ENCODE measurements at regions of chr4 and their contacts with region 1.

Region 1: GRCh38 chr4:173318648-173319211 is 15.4 kb downstream of the HMGB2 start:
- DNase-seq: no peak
- H3K4me3 ChIP-seq: no peak overlapping the region
- H3K27ac ChIP-seq: no peak overlapping the region
- H3K4me1 ChIP-seq: peaks cover 0 to 4% of the 10 kb centered on the region in 2 donors
- H3K27me3 ChIP-seq: no peaks in the 10 kb centered on the region
- CTCF ChIP-seq: peak; percentile 13 to 70 (median 54)
- POLR2A ChIP-seq: no peak

Region 2: GRCh38 chr4:173505924-173506518 is 187.3 kb after region 1 on chr4:
- intact Hi-C with region 1: loop called in 1 of 2 experiments (anchors 10 kb)
- DNase-seq: peak in 4 of 7 donors; percentile 25 to 80 (median 50)
- H3K4me3 ChIP-seq: no peak overlapping the region
- H3K27ac ChIP-seq: no peak overlapping the region
- H3K4me1 ChIP-seq: no peaks in the 10 kb centered on the region
- H3K27me3 ChIP-seq: peaks cover 84% of the 10 kb centered on the region
- CTCF ChIP-seq: peak in 5 of 6 experiments; percentile 29 to 55 (median 41)
- POLR2A ChIP-seq: no peak

Region 3: GRCh38 chr4:173565281-173565680 is 246.6 kb after region 1 on chr4:
- intact Hi-C with region 1: no loop called
- DNase-seq: no peak
- H3K4me3 ChIP-seq: no peak overlapping the region
- H3K27ac ChIP-seq: no peak overlapping the region
- H3K4me1 ChIP-seq: no peaks in the 10 kb centered on the region
- H3K27me3 ChIP-seq: no peaks in the 10 kb centered on the region
- CTCF ChIP-seq: no peak
- POLR2A ChIP-seq: no peak